RWPE1 (cell line): ENCODE measurements at regions of chr14 and their contacts with region 1.

Region 1: DNA sequence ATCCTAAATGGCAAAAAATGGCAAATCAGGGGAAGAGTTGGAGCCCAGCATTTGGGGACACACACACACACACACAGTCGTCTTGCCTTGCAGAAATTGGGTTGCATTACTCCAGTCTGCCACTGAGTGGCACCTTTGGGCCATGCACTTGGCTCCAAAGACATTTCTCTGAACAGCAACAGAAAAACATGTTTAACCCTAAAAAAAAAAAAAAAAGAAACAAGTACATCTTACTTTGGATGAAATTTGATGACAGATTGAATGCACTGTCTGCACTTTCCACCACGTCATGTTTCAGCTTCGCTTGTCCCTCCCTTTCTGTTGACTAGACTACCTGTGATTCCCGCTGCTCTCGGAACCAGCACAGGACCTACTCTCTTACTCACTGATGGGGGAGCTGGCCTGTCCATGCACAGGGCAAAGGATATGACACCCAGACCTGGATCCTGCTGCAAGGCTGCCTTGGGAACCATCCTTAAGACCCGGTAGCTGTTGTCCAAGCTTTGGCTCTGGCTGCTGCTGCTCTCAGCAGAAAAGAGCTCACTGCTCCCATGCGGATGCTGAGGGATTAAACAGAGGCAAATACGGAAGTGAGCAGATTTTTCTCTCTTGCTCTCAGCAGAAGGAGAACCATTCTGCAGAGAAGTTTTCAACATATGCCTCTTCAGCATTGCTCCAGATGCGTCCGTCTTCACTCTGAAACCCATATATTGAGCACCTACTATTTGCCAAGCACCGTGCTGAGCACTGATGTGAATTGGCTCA is 376.8 kb downstream of the DPF3 start:
- DNase-seq: no peak
- H3K27ac ChIP-seq: no peak overlapping the region
- CTCF ChIP-seq: peak; percentile 89

Region 2: GRCh38 chr14:72904840-72905561 is 387.9 kb after region 1 on chr14:
- CTCF ChIA-PET with region 1: interaction called, 100 read pairs
- POLR2A ChIA-PET with region 1: no interaction called
- DNase-seq: peak; percentile 64
- H3K27ac ChIP-seq: no peak overlapping the region
- CTCF ChIP-seq: peak; percentile 90

Region 3: DNA sequence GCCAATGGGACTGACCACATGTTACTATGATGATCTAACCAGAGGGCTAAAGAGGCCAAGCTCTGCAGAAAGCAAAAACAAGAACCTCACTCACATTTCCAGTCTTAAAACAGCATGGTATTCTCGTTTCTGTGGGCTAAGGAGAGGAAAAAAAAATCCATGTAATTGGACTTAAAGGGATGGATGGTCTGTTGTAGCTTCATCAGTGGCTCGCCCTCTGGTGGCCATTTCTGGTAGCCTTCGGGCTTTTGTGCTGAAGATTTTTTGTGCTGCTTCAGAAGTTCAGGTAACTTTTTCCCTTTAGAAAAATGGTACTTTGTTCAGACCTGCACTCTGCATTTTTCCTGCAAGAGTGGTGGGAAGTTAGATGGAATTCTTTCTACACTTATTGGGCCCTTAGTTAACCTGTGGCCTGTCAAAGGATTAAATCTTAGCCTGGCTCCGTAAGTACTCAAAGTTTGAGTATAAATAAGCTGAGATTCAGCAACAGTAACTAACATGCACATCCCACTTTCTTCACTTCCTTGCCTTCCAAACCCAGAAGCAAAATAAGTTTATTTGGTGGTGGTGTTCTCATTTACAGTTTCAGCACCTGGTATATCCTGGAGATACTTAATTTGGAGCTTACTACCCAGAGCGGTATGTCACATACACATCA is 431.5 kb after region 1 on chr14:
- CTCF ChIA-PET with region 1: interaction called, 25 read pairs
- POLR2A ChIA-PET with region 1: no interaction called
- DNase-seq: peak; percentile 57
- H3K27ac ChIP-seq: no peak overlapping the region
- CTCF ChIP-seq: peak; percentile 95